Aorta (tissue), 5 donors: ENCODE measurements at regions of chr13 and their contacts with region 1.

Region 1: GRCh38 chr13:25232937-25233515 is 54.3 kb downstream of the MTMR6 start:
- DNase-seq: no peak
- ATAC-seq: no peak
- H3K4me3 ChIP-seq: no peak overlapping the region
- H3K27ac ChIP-seq: no peak overlapping the region
- H3K4me1 ChIP-seq: no peaks in the 10 kb centered on the region
- H3K27me3 ChIP-seq: no peaks in the 10 kb centered on the region

Region 2: GRCh38 chr13:25375727-25376358 is 142.8 kb after region 1 on chr13:
- intact Hi-C with region 1: loop called in 1 of 2 experiments (anchors 5 kb)
- DNase-seq: no peak
- ATAC-seq: no peak
- H3K4me3 ChIP-seq: no peak overlapping the region
- H3K27ac ChIP-seq: no peak overlapping the region
- H3K4me1 ChIP-seq: no peaks in the 10 kb centered on the region
- H3K27me3 ChIP-seq: no peaks in the 10 kb centered on the region